ENCODE measurements at regions of chr9 and their contacts with region 1.

Region 1: GRCh38 chr9:128191406-128192046 is at the start of gene CIZ1:
- H3K4me3 ChIP-seq: peak within 1 kb of the TSS; percentile 59
- H3K27ac ChIP-seq: peak within 1 kb of the TSS; percentile 70
- H3K4me1 ChIP-seq: no peaks in the 10 kb centered on the region
- CTCF ChIP-seq: peak; percentile 72; the same call in 1 of the 2 replicates

Region 2: GRCh38 chr9:128159784-128160602 is 31.5 kb before region 1 on chr9 and contains the start of gene BBLN:
- CTCF ChIA-PET with region 1: interaction called, 6 read pairs
- POLR2A ChIA-PET with region 1: interaction called, 30 read pairs
- H3K4me3 ChIP-seq: peak within 1 kb of the TSS; percentile 60
- H3K27ac ChIP-seq: peak within 1 kb of the TSS; percentile 78
- H3K4me1 ChIP-seq: no peaks in the 10 kb centered on the region
- CTCF ChIP-seq: no peak

Region 3: DNA sequence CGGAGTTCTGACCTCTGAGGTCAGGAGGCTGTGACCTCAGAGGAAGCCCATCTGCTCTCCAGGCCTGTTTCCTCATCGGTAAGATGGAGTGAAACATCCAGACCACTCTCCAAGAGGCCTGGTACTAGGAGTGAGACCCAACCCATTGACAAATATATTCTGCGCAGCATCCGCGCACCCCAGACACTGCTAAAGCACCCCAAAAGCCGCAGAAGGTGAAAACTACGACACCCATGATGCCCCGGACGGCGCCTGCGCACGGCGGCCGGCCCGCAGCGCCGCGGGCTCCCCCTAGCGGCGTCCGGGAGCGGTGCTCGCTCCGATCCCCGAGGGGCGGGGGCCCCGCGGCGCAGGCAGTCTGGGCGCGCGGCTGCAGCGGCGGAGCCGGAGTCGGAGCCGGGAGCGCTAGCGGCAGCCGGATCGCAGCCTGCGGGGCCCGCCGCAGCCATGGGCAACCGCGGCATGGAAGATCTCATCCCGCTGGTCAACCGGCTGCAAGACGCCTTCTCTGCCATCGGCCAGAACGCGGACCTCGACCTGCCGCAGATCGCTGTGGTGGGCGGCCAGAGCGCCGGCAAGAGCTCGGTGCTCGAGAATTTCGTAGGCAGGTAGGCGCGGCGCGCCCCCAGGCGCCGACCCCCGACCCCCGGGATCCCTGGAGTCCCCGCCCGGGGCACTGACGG is 11.6 kb after region 1 on chr9 and contains the start of gene DNM1:
- CTCF ChIA-PET with region 1: interaction called, 11 read pairs
- POLR2A ChIA-PET with region 1: interaction called, 5 read pairs
- H3K4me3 ChIP-seq: peak within 1 kb of the TSS; percentile 68
- H3K27ac ChIP-seq: peak within 1 kb of the TSS; percentile 7; the same call in 1 of the 2 replicates
- H3K4me1 ChIP-seq: no peaks in the 10 kb centered on the region
- CTCF ChIP-seq: no peak

Region 4: DNA sequence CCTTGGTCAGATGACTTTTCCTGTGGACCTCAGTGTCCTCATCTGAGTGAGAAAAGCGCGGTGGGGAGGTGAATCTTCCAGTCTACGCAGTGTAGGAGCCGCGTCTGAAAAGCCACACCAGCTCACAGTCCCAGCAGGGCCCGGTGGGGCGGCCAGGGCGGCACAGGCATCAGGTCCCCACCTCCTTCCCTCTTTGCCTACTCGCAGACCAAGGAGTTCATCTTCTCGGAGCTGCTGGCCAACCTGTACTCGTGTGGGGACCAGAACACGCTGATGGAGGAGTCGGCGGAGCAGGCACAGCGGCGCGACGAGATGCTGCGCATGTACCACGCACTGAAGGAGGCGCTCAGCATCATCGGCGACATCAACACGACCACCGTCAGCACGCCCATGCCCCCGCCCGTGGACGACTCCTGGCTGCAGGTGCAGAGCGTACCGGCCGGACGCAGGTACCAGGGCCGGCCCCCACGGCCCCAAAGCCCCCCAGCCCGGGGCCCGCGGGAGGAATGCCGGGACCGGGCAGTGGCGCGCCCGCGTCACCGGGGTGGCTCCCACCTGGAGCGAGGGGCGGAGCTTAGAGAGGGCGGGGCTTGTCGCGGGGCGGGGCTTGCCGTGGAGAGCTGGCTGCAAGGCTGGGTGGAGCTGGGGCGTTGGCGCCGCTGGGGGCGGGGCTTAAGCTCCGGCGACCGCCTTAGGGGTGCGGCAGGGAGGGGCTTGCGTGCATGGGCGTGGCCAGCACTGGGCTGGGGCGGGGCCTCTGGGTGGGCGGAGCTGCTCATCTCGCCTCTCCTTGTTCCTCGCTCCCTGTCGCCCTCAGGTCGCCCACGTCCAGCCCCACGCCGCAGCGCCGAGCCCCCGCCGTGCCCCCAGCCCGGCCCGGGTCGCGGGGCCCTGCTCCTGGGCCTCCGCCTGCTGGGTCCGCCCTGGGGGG is 58.6 kb after region 1 on chr9:
- CTCF ChIA-PET with region 1: interaction called, 10 read pairs
- POLR2A ChIA-PET with region 1: interaction called, 6 read pairs
- H3K4me3 ChIP-seq: peak overlapping the region; percentile 25
- H3K27ac ChIP-seq: no peak overlapping the region
- H3K4me1 ChIP-seq: no peaks in the 10 kb centered on the region
- CTCF ChIP-seq: no peak

Region 5: GRCh38 chr9:128370826-128371621 is 179.5 kb after region 1 on chr9 and contains the start of gene URM1:
- CTCF ChIA-PET with region 1: interaction called, 8 read pairs
- POLR2A ChIA-PET with region 1: interaction called, 11 read pairs
- H3K4me3 ChIP-seq: peak within 1 kb of the TSS; percentile 74
- H3K27ac ChIP-seq: peak within 1 kb of the TSS; percentile 54
- H3K4me1 ChIP-seq: 0 out of 2 replicates have a peak, but pooled peaks cover 3% of the 10 kb centered on the region
- CTCF ChIP-seq: no peak

Measured in HEK293 (cell line).